BJ (cell line): ENCODE measurements at regions of chr9 and their contacts with region 1.

Region 1: DNA sequence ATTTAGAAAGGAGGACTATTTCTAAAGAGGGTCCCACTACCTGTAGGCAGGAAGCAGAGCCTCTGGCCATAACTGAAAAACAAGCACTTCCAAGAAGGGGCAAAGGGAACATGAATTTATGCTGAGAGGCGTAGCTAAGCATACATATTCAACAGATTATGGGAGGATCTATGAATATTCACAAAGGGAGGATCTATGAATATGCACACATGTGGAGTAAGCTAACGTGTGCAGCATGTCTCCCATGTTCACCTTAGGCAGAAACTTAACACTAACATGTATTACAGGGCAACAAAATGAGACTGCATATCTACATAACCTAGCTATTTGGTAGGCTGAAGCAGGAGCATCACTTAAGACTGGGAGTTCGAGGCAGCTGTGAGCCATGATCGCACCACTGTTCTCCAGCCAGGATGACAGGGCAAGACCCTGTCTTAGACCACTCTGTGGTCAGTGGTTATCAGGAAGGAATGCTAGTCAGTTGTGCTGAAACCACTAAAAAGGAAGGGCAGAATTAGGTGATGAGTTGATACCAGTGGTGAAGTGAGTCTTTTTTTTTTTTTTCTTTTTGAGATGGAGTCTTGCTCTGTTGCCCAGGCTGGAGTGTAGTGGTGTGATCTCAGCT is 20.8 kb downstream of the FXN start:
- DNase-seq: no peak
- H3K4me3 ChIP-seq: no peak overlapping the region
- H3K27me3 ChIP-seq: no peaks in the 10 kb centered on the region
- CTCF ChIP-seq: no peak

Region 2: DNA sequence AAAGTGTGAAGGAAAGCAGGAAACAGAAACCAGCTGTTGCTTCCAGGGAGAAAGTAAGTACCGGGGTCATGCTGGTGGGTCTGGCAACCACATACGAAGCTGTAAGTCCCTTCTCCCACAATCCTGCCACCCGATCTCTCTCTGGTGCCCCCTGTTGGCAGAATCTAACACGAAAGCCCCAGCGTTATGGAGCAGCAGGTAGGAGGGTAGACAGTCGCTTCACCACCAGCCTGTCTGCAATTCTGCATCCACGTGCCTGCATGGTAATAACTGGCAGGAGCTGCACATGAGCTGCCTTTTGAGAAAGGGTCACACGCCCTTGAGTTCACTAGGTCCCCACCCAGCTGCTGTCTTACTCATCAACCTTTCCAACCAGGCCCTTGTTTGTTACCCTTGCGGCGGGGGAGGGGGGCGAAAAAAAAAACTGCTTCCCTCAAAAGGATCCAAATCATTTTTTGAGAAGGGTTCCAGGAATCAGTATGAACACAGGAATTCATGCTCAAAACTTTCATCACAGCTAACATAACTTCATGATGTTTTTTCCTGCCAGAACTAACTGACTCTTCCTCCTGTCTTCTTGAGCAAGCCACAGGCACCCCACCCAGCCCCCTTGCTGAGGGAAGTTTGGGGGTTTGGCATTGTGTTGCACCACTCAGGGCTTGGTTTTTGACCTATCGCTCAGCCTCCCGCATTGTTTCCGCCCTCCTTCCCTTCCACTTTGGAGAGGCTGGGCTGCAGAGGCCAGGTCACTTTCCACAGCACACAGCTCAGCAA is 496.0 kb before region 1 on chr9:
- CTCF ChIA-PET with region 1: no interaction called
- POLR2A ChIA-PET with region 1: no interaction called
- DNase-seq: no peak
- H3K4me3 ChIP-seq: no peak overlapping the region
- H3K27me3 ChIP-seq: no peaks in the 10 kb centered on the region
- CTCF ChIP-seq: peak; percentile 47

Region 3: GRCh38 chr9:68905129-68905528 is 151.2 kb before region 1 on chr9:
- CTCF ChIA-PET with region 1: no interaction called
- POLR2A ChIA-PET with region 1: no interaction called
- DNase-seq: no peak
- H3K4me3 ChIP-seq: no peak overlapping the region
- H3K27me3 ChIP-seq: no peaks in the 10 kb centered on the region; the same call in 1 of the 2 replicates
- CTCF ChIP-seq: no peak

Region 4: GRCh38 chr9:69035438-69036308 is 20.6 kb before region 1 on chr9 and contains the start of gene FXN:
- CTCF ChIA-PET with region 1: interaction called, 12 read pairs
- POLR2A ChIA-PET with region 1: no interaction called
- DNase-seq: no peak
- H3K4me3 ChIP-seq: peak within 1 kb of the TSS; percentile 60
- H3K27me3 ChIP-seq: no peaks in the 10 kb centered on the region; the same call in 1 of the 2 replicates
- CTCF ChIP-seq: peak; percentile 98
- polyA plus RNA-seq, gene FXN: 9.2 and 14.8 TPM in 2 replicates

Region 5: DNA sequence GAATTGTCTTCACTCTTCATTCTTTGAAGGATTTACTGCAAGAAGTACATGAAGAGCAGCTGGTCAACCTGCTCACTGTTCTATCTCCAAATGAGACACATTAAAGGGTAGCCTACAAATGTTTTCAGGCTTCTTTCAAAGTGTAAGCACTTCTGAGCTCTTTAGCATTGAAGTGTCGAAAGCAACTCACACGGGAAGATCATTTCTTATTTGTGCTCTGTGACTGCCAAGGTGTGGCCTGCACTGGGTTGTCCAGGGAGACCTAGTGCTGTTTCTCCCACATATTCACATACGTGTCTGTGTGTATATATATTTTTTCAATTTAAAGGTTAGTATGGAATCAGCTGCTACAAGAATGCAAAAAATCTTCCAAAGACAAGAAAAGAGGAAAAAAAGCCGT is 16.8 kb after region 1 on chr9:
- CTCF ChIA-PET with region 1: interaction called, 18 read pairs
- POLR2A ChIA-PET with region 1: no interaction called
- DNase-seq: no peak
- H3K4me3 ChIP-seq: no peak overlapping the region
- H3K27me3 ChIP-seq: no peaks in the 10 kb centered on the region
- CTCF ChIP-seq: no peak

Region 6: DNA sequence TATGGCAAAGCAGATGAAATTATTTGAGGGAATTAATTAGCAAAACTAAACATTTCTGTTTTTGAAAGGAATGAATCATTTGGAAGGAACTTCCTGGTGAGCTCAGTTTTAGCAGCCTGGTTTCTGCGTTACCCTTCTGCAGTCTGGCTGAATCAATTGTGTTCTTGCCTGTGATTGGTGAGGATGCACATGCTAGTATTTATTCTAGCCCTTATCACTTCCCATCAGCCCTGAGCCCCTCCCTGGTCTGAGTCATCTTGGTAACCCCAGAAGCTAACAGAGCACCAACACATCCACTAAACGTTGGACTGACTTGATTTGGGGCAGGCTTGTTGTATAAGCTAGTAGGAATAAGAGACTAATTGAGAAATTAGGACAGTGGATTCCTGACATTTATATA is 124.4 kb after region 1 on chr9:
- CTCF ChIA-PET with region 1: interaction called, 39 read pairs
- POLR2A ChIA-PET with region 1: no interaction called
- DNase-seq: peak; percentile 95
- H3K4me3 ChIP-seq: no peak overlapping the region
- H3K27me3 ChIP-seq: no peaks in the 10 kb centered on the region
- CTCF ChIP-seq: no peak

Region 7: DNA sequence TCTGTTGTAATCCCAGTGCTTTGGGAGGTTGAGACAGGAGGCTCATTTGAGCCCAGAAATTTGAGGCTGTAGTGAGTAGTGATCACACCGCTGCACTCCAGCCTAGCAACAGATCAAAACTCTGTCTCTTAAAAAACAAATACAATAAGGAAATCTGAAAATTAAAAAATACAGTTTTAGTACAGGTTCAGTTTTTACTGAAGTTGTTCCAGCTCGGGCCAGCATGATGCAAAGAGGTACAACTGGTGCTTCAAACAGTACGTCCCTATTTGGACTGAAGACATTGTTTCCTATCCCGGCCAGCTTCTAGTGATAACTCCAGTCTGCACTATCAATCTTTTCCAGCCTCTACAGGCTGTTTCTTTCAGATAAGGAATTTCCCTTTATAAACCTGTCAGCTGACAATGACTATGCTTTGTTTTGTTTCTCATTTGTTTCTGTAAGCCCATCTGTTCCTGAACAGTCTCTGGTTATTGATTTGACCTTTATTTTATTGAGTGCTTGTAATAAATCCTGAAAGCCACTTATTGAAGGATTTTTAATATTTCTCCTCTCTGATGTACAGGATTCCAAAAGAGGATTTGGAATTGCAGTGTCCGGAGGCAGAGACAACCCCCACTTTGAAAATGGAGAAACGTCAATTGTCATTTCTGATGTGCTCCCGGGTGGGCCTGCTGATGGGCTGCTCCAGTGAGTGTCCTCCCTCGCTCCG is 159.6 kb after region 1 on chr9:
- CTCF ChIA-PET with region 1: interaction called, 15 read pairs
- POLR2A ChIA-PET with region 1: no interaction called
- DNase-seq: no peak
- H3K4me3 ChIP-seq: no peak overlapping the region
- H3K27me3 ChIP-seq: no peaks in the 10 kb centered on the region
- CTCF ChIP-seq: no peak